ENCODE measurements at regions of chr9 and their contacts with region 1.

Region 1: GRCh38 chr9:9605681-9606080 is 1007.1 kb downstream of the PTPRD start:
- DNase-seq: no peak
- H3K4me3 ChIP-seq: no peak overlapping the region
- H3K4me3 Mint-ChIP-seq: no peak overlapping the region
- H3K27ac Mint-ChIP-seq: no peak overlapping the region
- H3K4me1 ChIP-seq: no peaks in the 10 kb centered on the region
- H3K4me1 Mint-ChIP-seq: no peaks in the 10 kb centered on the region
- H3K27me3 ChIP-seq: no peaks in the 10 kb centered on the region
- H3K27me3 Mint-ChIP-seq: no peaks in the 10 kb centered on the region
- CTCF ChIP-seq: no peak

Region 2: DNA sequence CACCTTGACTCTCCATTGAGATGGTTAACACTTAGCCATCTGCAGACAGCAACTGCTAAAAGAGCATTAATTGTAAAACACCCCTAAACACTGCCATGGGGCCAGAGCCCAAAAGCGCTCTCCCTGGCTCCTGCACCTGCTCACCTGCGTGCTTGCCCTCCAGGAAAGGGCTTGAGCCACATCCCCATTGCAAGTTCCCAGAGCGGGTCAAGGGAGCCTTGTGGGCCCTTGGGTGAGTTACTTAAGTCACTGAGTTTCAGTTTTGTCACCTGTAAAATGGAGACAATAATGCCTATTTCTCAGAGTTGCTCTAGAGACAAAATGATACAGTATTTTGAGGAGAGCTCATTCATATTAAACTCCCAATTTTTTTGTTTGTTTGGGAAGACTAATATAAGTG is 39.3 kb after region 1 on chr9:
- CTCF ChIA-PET with region 1: no interaction called
- POLR2A ChIA-PET with region 1: no interaction called
- intact Hi-C with region 1: no loop called
- DNase-seq: no peak
- H3K4me3 ChIP-seq: no peak overlapping the region
- H3K4me3 Mint-ChIP-seq: no peak overlapping the region
- H3K27ac Mint-ChIP-seq: no peak overlapping the region
- H3K4me1 ChIP-seq: no peaks in the 10 kb centered on the region
- H3K4me1 Mint-ChIP-seq: no peaks in the 10 kb centered on the region
- H3K27me3 ChIP-seq: no peaks in the 10 kb centered on the region
- H3K27me3 Mint-ChIP-seq: no peaks in the 10 kb centered on the region
- CTCF ChIP-seq: no peak

Region 3: DNA sequence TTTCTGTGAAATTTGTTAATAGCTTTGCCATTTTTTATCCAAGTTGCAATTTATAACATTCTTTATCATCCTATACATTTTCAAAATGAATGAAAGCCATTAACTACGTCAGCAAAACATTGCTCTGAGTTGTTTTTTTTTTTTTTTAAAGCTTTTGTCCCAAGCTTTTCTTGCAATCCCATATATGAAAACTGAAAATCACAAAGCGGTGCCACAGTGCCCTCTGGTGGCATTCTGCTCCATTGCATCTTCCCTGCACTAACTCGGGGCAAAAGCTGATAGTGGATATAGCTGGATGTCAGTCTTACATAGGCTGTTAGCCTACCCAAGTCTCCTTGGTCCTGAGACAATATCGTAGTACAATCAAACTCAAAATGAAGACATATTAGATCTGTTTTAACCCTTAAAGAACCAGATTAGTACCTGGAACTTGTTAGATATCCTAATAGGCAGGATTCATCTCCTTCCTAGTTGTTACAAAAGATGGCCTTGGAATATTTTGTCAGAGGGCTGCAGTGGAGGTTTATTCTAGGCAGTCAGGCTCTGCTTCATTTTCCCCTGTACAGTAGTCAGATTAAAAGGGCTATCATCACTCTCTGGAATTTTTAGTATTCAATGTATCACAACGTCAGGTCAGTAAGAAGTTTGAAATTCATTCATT is 337.2 kb after region 1 on chr9:
- CTCF ChIA-PET with region 1: no interaction called
- POLR2A ChIA-PET with region 1: no interaction called
- intact Hi-C with region 1: loop called (anchors 1 kb)
- DNase-seq: peak; percentile 28 to 39
- H3K4me3 ChIP-seq: no peak overlapping the region
- H3K4me3 Mint-ChIP-seq: no peak overlapping the region
- H3K27ac Mint-ChIP-seq: no peak overlapping the region
- H3K4me1 ChIP-seq: no peaks in the 10 kb centered on the region
- H3K4me1 Mint-ChIP-seq: no peaks in the 10 kb centered on the region
- H3K27me3 ChIP-seq: no peaks in the 10 kb centered on the region
- H3K27me3 Mint-ChIP-seq: no peaks in the 10 kb centered on the region
- CTCF ChIP-seq: peak; percentile 25 to 63

Region 4: GRCh38 chr9:10014889-10015288 is 409.2 kb after region 1 on chr9:
- CTCF ChIA-PET with region 1: no interaction called
- POLR2A ChIA-PET with region 1: no interaction called
- intact Hi-C with region 1: no loop called
- DNase-seq: no peak
- H3K4me3 ChIP-seq: no peak overlapping the region
- H3K4me3 Mint-ChIP-seq: no peak overlapping the region
- H3K27ac Mint-ChIP-seq: no peak overlapping the region
- H3K4me1 ChIP-seq: no peaks in the 10 kb centered on the region
- H3K4me1 Mint-ChIP-seq: no peaks in the 10 kb centered on the region
- H3K27me3 ChIP-seq: no peaks in the 10 kb centered on the region
- H3K27me3 Mint-ChIP-seq: no peaks in the 10 kb centered on the region
- CTCF ChIP-seq: no peak

Measured in Caco-2 (cell line).